Activated CD4-positive, alpha-beta memory T cell treated with anti-CD3 and anti-CD28 coated beads for 36 hours (primary cell): ENCODE measurements at regions of chr11 and their contacts with region 1.

Region 1: GRCh38 chr11:17354601-17354991 is 3.0 kb downstream of the NCR3LG1 start:
- DNase-seq: peak; percentile 70
- H3K4me3 Mint-ChIP-seq: peak overlapping the region; percentile 2
- H3K27ac Mint-ChIP-seq: no peak overlapping the region
- H3K4me1 Mint-ChIP-seq: peaks cover 33% of the 10 kb centered on the region
- H3K27me3 Mint-ChIP-seq: peaks cover 16% of the 10 kb centered on the region

Region 2: DNA sequence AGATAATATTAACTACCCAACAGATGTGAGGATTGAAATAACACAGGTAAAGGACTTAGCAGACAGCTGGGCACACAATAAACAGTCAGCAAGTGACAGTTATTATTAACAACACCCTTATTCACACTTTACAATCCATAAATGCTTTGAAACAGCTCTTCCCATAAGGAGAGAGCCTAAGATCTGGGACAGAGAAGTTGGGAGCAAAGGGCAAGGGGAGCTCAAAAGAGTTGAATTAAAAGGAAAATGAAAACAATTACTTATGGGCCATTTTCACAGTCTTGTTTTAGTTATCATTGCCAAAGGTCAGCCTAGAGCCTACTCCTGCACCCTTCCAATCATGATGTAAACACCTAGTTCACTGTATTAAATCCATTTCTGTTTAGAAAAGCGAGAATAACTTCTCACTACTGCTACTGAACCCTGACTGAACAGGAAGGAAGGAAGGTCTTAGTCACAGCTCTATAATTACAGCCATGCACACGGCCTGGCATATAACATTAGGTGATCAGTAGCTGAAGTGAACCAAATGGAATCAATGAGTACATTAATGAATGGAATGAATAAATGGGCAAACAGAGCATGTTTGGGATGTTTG is 451.7 kb before region 1 on chr11:
- CTCF ChIA-PET with region 1: no interaction called
- POLR2A ChIA-PET with region 1: no interaction called
- intact Hi-C with region 1: loop called (anchors 2 kb)
- DNase-seq: peak; percentile 29
- H3K4me3 Mint-ChIP-seq: peak overlapping the region; percentile 31
- H3K27ac Mint-ChIP-seq: peak overlapping the region; percentile 95
- H3K4me1 Mint-ChIP-seq: peaks cover 48% of the 10 kb centered on the region
- H3K27me3 Mint-ChIP-seq: no peaks in the 10 kb centered on the region

Region 3: GRCh38 chr11:17230867-17231851 is 123.4 kb before region 1 on chr11:
- CTCF ChIA-PET with region 1: interaction called, 15 read pairs
- POLR2A ChIA-PET with region 1: no interaction called
- intact Hi-C with region 1: loop called (anchors 1 kb)
- DNase-seq: peak; percentile 63
- H3K4me3 Mint-ChIP-seq: no peak overlapping the region
- H3K27ac Mint-ChIP-seq: no peak overlapping the region
- H3K4me1 Mint-ChIP-seq: peaks cover 13% of the 10 kb centered on the region
- H3K27me3 Mint-ChIP-seq: peaks cover 11% of the 10 kb centered on the region

Region 4: GRCh38 chr11:17276236-17277023 is 78.2 kb before region 1 on chr11 and contains the start of gene NUCB2:
- CTCF ChIA-PET with region 1: no interaction called
- POLR2A ChIA-PET with region 1: interaction called, 4 read pairs
- intact Hi-C with region 1: loop called (anchors 1 kb)
- DNase-seq: peak; percentile 97
- H3K4me3 Mint-ChIP-seq: peak within 1 kb of the TSS; percentile 89
- H3K27ac Mint-ChIP-seq: peak within 1 kb of the TSS; percentile 87
- H3K4me1 Mint-ChIP-seq: peaks cover 32% of the 10 kb centered on the region
- H3K27me3 Mint-ChIP-seq: no peaks in the 10 kb centered on the region
- total RNA-seq, gene NUCB2: 38.1 to 38.2 TPM

Region 5: GRCh38 chr11:17366495-17366894 is 11.9 kb after region 1 on chr11:
- CTCF ChIA-PET with region 1: interaction called, 11 read pairs
- POLR2A ChIA-PET with region 1: no interaction called
- intact Hi-C with region 1: no loop called
- DNase-seq: no peak
- H3K4me3 Mint-ChIP-seq: no peak overlapping the region
- H3K27ac Mint-ChIP-seq: no peak overlapping the region
- H3K4me1 Mint-ChIP-seq: no peaks in the 10 kb centered on the region
- H3K27me3 Mint-ChIP-seq: no peaks in the 10 kb centered on the region

Region 6: GRCh38 chr11:17550450-17551346 is 196.1 kb after region 1 on chr11:
- CTCF ChIA-PET with region 1: no interaction called
- POLR2A ChIA-PET with region 1: no interaction called
- intact Hi-C with region 1: no loop called
- DNase-seq: no peak
- H3K4me3 Mint-ChIP-seq: no peak overlapping the region
- H3K27ac Mint-ChIP-seq: no peak overlapping the region
- H3K4me1 Mint-ChIP-seq: no peaks in the 10 kb centered on the region
- H3K27me3 Mint-ChIP-seq: peaks cover 19% of the 10 kb centered on the region

Region 7: DNA sequence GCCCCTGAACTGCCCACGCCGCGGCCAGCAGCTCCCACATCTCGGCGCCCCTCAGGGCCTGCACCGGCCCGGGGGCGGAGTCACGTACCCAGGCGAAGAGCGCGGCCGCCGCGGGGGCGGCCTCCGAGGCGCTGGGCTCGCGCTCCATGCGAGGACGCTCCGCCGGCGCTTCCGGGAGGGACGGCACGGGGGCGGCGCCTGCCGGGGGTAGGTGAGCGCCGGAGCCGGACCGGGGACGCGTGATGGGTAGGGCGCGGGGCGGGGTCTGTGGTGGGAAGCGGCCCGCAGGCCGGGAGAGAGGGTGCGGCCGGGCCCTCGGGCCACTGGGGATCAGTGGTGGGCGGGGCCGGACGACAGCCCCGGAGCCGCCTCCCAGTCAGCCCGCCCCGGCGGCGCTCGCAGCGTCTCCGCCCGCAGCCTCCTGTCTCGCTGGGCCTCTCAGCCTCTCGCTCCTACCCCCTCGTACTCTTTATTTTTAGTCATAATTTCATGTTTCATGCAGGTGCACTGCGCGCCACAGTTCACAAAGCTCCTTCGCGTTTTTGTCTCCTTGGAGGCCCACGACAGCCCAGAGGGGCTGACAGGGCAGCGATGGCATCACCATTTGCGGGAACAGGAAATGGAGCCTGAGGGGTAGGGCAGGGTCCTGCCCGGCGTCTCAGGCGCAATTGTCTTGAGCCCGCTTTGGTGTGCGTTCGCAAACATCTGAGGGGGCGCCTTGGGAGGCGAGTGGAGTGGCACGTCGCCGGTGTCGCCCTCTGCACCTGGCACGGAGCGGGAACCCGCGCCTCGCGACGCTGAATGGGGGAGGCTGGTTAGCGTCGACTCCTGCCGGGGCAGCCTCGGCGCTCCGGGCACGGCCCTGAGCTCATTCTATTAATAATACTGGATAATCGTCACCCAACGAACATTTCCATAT is 658.5 kb after region 1 on chr11 and contains the start of gene SERGEF:
- CTCF ChIA-PET with region 1: no interaction called
- POLR2A ChIA-PET with region 1: no interaction called
- intact Hi-C with region 1: loop called (anchors 10 kb)
- DNase-seq: peak; percentile 95
- H3K4me3 Mint-ChIP-seq: peak within 1 kb of the TSS; percentile 93
- H3K27ac Mint-ChIP-seq: peak within 1 kb of the TSS; percentile 88
- H3K4me1 Mint-ChIP-seq: peaks cover 40% of the 10 kb centered on the region
- H3K27me3 Mint-ChIP-seq: no peaks in the 10 kb centered on the region
- total RNA-seq, gene SERGEF: 42.7 to 44.2 TPM